Right ventricle myocardium inferior (tissue), 1 donor: ENCODE measurements at regions of chr5 and their contacts with region 1.

Region 1: DNA sequence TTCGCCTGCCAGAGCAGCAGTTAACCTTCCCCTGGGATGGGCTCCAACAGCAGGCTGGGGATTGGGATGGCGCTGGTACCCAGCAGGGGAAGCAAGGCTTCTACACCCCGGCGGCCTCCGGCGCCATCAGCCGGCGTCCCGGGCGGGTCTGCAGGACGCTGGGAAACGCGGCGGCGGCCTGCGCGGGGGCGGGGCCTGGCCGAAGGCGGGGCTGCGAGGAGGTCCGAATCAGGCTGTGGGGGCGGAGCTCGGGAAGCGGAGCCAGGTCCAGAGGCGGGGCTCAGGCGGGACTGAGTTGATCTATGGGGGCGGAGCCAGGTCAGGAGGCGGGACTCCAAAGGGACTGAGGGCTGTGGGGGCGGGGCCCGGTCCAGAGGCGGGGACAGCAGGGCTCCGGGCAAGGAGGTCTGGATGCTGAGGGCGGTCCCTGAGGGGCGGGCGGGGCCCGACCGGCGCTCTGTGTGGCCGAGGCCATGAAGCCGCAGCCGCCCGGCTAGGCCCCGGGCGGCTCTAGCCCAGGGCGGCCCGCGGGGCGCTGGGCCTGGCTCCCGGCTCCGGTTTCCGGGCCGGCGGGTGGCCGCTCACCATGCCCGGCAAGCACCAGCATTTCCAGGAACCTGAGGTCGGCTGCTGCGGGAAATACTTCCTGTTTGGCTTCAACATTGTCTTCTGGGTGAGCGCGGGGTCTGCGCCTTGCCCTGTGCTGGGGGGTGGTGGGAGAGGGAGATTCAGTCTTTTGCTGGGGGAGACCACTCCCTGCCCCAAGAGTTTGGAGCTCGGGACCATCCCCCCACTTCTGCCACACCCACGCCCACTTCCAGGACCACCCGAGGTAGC is at the start of gene TSPAN17:
- DNase-seq: peak; percentile 100
- ATAC-seq: peak; percentile 99
- total RNA-seq, gene TSPAN17: 30.0 TPM

Region 2: GRCh38 chr5:176481711-176482110 is 165.5 kb before region 1 on chr5:
- intact Hi-C with region 1: no loop called
- DNase-seq: no peak
- ATAC-seq: no peak

Region 3: GRCh38 chr5:176573564-176574296 is 73.5 kb before region 1 on chr5:
- intact Hi-C with region 1: loop called (anchors 1 kb)
- DNase-seq: peak; percentile 84
- ATAC-seq: peak; percentile 82

Region 4: GRCh38 chr5:176629853-176630712 is 17.2 kb before region 1 on chr5 and contains the starts of genes EIF4E1B and SNCB:
- intact Hi-C with region 1: no loop called
- DNase-seq: no peak
- ATAC-seq: peak; percentile 70
- total RNA-seq, gene EIF4E1B: not detected
- total RNA-seq, gene SNCB: not detected

Region 5: GRCh38 chr5:176744584-176744965 is 97.3 kb after region 1 on chr5:
- intact Hi-C with region 1: no loop called
- DNase-seq: no peak
- ATAC-seq: no peak

Region 6: GRCh38 chr5:176979669-176980068 is 332.4 kb after region 1 on chr5:
- intact Hi-C with region 1: no loop called
- DNase-seq: no peak
- ATAC-seq: no peak